Breast epithelium (tissue), 4 donors: ENCODE measurements at regions of chr21 and their contacts with region 1.

Region 1: GRCh38 chr21:16579538-16579937 is 849.8 kb downstream of the USP25 start:
- DNase-seq: no peak
- H3K4me3 ChIP-seq: peak overlapping the region in 1 of 3 donors; percentile 37
- H3K27ac ChIP-seq: peak overlapping the region; percentile 31 to 71
- H3K4me1 ChIP-seq: no peaks in the 10 kb centered on the region
- H3K27me3 ChIP-seq: no peaks in the 10 kb centered on the region
- CTCF ChIP-seq: no peak
- POLR2A ChIP-seq: no peak

Region 2: DNA sequence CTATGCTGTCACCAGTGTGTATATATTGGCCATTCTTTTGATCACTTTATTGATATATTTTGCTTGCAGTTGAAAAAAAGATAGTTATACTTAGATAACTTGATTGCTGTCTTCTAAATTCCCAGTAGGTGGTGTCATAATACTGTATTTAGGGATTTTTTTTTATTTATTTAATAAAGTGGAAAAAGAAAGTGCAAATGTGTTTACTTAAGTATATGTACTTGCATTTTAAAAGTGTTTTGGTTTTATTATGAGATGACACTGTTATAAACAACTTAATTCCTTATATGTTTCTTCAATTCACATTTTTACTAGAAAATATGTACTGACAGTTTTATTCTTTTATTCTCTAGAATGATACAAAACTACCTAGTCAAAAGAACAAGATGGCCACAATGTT is 684.9 kb before region 1 on chr21:
- intact Hi-C with region 1: loop called (anchors 5 kb)
- DNase-seq: no peak
- H3K4me3 ChIP-seq: no peak overlapping the region
- H3K27ac ChIP-seq: no peak overlapping the region
- H3K4me1 ChIP-seq: no peaks in the 10 kb centered on the region
- H3K27me3 ChIP-seq: no peaks in the 10 kb centered on the region
- CTCF ChIP-seq: peak in 1 of 3 donors; percentile 27
- POLR2A ChIP-seq: no peak